CD4-positive, alpha-beta T cell (primary cell): ENCODE measurements at regions of chr15 and their contacts with region 1.

Region 1: DNA sequence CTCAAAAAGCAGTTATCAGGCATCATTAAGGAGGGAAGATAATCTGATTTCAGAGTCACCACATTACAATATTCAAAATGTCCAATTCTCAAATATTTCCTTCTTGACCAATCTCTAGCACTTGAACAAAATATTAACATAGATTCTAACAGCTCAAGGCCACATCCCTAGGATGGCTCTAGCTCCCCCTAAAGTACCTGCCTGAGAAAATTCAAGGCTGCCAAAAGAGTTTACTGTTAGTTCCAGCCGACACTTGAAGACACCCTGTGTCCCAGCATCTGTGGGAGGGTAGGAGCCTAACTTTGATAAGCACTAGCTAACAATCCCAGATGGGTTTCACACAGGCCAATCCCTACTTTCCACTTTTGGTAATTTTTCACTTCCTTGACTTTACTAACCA is 10.4 kb downstream of the NSMCE3 start:
- DNase-seq: no peak
- ATAC-seq: no peak
- H3K4me3 ChIP-seq: no peak overlapping the region
- H3K4me3 Mint-ChIP-seq: no peak overlapping the region
- H3K27ac ChIP-seq: no peak overlapping the region
- H3K27ac Mint-ChIP-seq: no peak overlapping the region
- H3K4me1 ChIP-seq: no peaks in the 10 kb centered on the region
- H3K4me1 Mint-ChIP-seq: peaks cover 18% of the 10 kb centered on the region
- H3K27me3 ChIP-seq: no peaks in the 10 kb centered on the region
- H3K27me3 Mint-ChIP-seq: peaks cover 5% of the 10 kb centered on the region
- CTCF ChIP-seq: no peak

Region 2: DNA sequence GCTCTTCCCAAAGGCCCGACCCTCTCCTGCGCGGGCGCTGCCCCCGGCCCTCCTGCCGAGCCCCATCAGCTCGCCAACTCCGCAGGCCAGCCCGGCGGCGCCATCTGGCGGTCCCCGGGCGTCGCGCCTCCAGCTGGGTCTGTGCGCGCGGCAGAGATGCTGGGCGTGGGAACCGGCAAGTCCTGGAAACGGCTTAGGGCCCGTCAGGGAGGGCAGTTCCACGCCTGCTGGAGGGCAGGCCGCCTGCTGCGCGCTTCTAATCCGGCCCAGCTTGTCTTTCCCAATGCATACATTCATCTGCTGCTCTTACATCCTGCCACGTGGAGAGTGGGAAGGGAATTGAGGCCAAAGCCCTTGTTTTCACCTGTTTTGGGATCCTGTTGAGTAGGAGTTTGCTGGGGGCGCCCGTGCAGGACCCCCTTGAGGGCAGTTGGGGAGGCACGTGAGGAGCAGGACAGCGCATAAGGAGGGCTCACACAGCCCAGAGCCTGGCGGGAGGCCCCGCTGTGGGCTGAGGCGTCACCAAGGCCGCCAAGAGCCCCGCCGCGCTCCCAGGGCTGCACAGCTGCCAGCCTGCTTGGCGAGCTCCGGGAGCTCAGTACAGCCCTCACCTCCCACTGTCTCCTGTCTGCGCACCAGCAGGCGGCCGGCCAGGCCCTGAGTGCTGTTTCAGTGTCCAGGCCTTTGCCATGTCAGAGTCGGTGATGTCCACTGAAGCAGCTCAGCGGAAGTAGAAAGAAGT is 155.2 kb before region 1 on chr15:
- CTCF ChIA-PET with region 1: no interaction called
- POLR2A ChIA-PET with region 1: no interaction called
- intact Hi-C with region 1: loop called in 1 of 2 experiments (anchors 5 kb)
- DNase-seq: peak; percentile 25 to 70 (median 46)
- ATAC-seq: peak; percentile 72
- H3K4me3 ChIP-seq: no peak overlapping the region
- H3K4me3 Mint-ChIP-seq: no peak overlapping the region
- H3K27ac ChIP-seq: no peak overlapping the region
- H3K27ac Mint-ChIP-seq: no peak overlapping the region
- H3K4me1 ChIP-seq: peaks cover 3% of the 10 kb centered on the region
- H3K4me1 Mint-ChIP-seq: peaks cover 11% of the 10 kb centered on the region
- H3K27me3 ChIP-seq: no peaks in the 10 kb centered on the region
- H3K27me3 Mint-ChIP-seq: no peaks in the 10 kb centered on the region
- CTCF ChIP-seq: peak; percentile 69

Region 3: GRCh38 chr15:29312387-29312786 is 53.2 kb after region 1 on chr15:
- CTCF ChIA-PET with region 1: no interaction called
- POLR2A ChIA-PET with region 1: no interaction called
- intact Hi-C with region 1: loop called in 1 of 2 experiments (anchors 10 kb)
- DNase-seq: no peak
- ATAC-seq: no peak
- H3K4me3 ChIP-seq: no peak overlapping the region
- H3K4me3 Mint-ChIP-seq: no peak overlapping the region
- H3K27ac ChIP-seq: no peak overlapping the region
- H3K27ac Mint-ChIP-seq: no peak overlapping the region
- H3K4me1 ChIP-seq: no peaks in the 10 kb centered on the region
- H3K4me1 Mint-ChIP-seq: no peaks in the 10 kb centered on the region
- H3K27me3 ChIP-seq: no peaks in the 10 kb centered on the region
- H3K27me3 Mint-ChIP-seq: peaks cover 4% of the 10 kb centered on the region
- CTCF ChIP-seq: no peak